ENCODE measurements at regions of chr1 and their contacts with region 1.

Region 1: DNA sequence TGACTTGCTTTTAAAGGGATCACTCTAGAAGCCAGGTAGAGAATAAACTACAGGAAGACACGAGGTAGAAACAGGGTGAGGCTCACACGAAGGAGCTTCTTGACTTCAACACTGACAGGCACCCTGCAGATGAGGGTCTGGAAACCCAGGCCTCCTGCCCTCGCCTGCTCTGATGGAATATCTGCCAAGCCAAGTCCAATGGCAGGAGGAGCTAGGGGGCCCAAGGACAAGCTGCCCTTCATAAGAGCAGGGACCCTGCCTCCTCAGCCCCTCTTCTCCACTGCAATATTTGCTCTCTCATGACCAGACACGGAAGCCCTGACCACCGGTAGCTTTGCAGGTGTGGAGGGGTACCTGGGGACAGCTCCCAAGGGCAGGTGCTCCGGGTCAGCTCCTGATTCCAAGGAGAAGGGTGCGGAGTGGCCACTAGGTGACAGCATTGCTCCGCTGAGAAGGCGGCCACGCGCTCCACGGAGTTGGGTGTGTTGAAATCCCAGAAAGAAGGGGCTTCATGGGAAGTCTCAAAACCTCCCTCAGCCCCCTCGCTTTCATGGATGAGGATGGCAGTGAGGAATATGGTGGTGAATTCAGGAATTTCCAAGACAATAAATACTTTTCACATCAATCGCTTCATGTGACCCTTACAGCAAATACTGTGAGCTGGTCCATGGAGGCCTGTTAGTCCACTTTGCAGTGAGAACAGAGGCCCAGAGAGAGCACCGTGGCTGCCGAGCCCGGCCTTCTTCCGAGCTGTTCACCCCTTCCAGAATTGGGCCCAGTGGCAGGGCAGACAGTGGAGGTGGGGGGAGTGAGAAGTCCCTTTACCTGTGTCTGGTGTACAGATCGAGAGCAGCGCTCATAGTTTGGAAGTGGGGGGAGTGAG is 33.2 kb upstream of the PAX7 start:
- DNase-seq: peak; percentile 75
- ATAC-seq: peak; percentile 58
- H3K4me3 Mint-ChIP-seq: no peak overlapping the region
- H3K27ac Mint-ChIP-seq: no peak overlapping the region
- H3K4me1 Mint-ChIP-seq: no peaks in the 10 kb centered on the region
- H3K27me3 Mint-ChIP-seq: peaks cover 19% of the 10 kb centered on the region

Region 2: GRCh38 chr1:18668796-18669404 is 71.5 kb after region 1 on chr1:
- CTCF ChIA-PET with region 1: interaction called, 14 read pairs
- POLR2A ChIA-PET with region 1: no interaction called
- intact Hi-C with region 1: no loop called
- DNase-seq: no peak
- ATAC-seq: no peak
- H3K4me3 Mint-ChIP-seq: no peak overlapping the region
- H3K27ac Mint-ChIP-seq: no peak overlapping the region
- H3K4me1 Mint-ChIP-seq: peaks cover 12% of the 10 kb centered on the region
- H3K27me3 Mint-ChIP-seq: no peaks in the 10 kb centered on the region

Region 3: GRCh38 chr1:18681423-18681835 is 84.0 kb after region 1 on chr1:
- CTCF ChIA-PET with region 1: interaction called, 14 read pairs
- POLR2A ChIA-PET with region 1: no interaction called
- intact Hi-C with region 1: loop called (anchors 1 to 2 kb)
- DNase-seq: peak; percentile 20
- ATAC-seq: peak; percentile 42
- H3K4me3 Mint-ChIP-seq: no peak overlapping the region
- H3K27ac Mint-ChIP-seq: no peak overlapping the region
- H3K4me1 Mint-ChIP-seq: no peaks in the 10 kb centered on the region
- H3K27me3 Mint-ChIP-seq: peaks cover 9% of the 10 kb centered on the region

Region 4: GRCh38 chr1:18820791-18821641 is 223.6 kb after region 1 on chr1:
- CTCF ChIA-PET with region 1: interaction called, 30 read pairs
- POLR2A ChIA-PET with region 1: no interaction called
- intact Hi-C with region 1: loop called (anchors 1 to 2 kb)
- DNase-seq: peak; percentile 78
- ATAC-seq: peak; percentile 63
- H3K4me3 Mint-ChIP-seq: no peak overlapping the region
- H3K27ac Mint-ChIP-seq: no peak overlapping the region
- H3K4me1 Mint-ChIP-seq: no peaks in the 10 kb centered on the region
- H3K27me3 Mint-ChIP-seq: peaks cover 46% of the 10 kb centered on the region

Region 5: DNA sequence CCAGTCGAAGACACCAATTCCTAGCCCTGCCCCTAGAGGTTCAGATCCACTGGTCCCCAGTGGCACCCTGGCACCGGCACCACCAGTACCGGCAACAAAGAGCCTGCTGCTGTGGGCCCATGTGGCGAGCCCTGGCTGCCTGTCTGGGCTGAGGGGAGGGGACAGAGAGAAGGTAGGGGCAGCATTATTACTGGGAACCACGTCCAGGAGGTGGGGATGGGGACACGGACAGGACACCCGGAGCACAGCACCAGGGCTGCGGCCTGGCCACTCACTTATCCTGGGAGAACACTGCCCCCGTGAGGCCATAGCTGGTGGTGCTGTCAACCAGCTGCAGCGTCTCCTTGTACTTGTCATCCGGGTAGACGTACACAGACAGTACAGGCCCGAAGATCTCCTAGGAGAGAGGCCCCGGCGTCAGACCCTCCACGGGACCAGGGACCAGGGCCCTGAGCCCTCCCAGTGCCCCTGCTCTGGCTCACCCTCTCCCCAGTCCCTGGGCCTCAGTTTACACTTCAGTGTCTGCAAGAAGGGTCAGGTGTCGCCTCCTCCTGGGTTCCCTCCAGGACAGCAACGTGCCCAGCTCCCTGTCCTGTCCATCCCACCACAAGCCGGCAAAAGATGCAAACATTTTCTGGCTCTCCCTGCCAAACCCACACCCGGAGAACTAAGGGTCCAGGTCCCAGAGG is 277.9 kb after region 1 on chr1:
- CTCF ChIA-PET with region 1: interaction called, 10 read pairs
- POLR2A ChIA-PET with region 1: no interaction called
- intact Hi-C with region 1: loop called (anchors 1 to 5 kb)
- DNase-seq: peak; percentile 88
- ATAC-seq: peak; percentile 81
- H3K4me3 Mint-ChIP-seq: no peak overlapping the region
- H3K27ac Mint-ChIP-seq: no peak overlapping the region
- H3K4me1 Mint-ChIP-seq: no peaks in the 10 kb centered on the region
- H3K27me3 Mint-ChIP-seq: no peaks in the 10 kb centered on the region